HEK293 (cell line): ENCODE measurements at regions of chr6 and their contacts with region 1.

Region 1: DNA sequence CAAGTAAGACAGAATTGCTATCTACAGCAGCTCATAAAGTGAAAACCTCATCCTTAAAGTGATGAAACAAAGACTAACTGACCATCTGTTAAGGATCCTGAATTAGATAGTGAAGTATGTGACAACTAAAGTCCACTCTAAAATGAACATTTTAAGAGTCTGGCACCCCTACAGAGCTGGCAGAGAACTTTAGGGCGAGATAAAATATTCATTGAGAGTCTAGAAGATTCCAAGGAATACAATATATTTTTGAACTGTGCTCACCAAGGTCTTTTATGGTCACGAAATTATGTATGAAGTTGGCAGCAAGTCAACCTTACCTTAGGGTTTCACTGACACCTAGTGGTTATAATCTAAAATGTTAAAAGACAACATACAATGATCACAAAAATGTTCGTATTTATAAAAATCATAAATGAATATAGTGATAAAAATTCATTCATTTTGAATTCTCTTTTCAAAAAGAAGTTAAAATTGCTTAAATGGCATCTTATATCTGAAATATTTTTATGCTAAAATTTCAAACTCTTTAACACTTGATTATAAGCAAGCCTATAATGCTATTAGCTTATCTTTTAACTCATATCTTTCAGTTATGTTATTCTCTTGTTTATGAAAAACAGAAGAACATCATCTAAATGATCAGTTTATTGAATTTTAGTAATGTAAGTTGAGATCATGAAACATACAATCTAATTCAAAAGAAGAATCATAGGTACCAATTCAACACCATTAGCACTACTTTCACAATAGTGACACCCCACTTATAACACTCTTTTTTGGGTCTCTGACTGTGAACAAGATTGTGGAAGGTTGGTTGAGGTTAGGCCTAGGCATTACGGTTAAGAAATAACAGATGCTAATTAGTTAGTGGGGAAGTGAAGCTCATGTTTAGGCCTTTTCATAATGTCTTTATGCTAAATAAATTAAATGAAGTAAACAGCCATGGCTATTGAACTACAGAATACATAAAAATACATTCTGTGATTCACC is 27.5 kb downstream of the RSPH3 start:
- H3K4me3 ChIP-seq: no peak overlapping the region
- H3K27ac ChIP-seq: no peak overlapping the region
- H3K4me1 ChIP-seq: no peaks in the 10 kb centered on the region
- CTCF ChIP-seq: no peak

Region 2: GRCh38 chr6:158704181-158704822 is 268.2 kb before region 1 on chr6:
- CTCF ChIA-PET with region 1: interaction called, 81 read pairs
- POLR2A ChIA-PET with region 1: no interaction called
- H3K4me3 ChIP-seq: peak overlapping the region; percentile 41
- H3K27ac ChIP-seq: no peak overlapping the region
- H3K4me1 ChIP-seq: peaks cover 10% of the 10 kb centered on the region; the same call in 1 of the 2 replicates
- CTCF ChIP-seq: peak; percentile 99

Region 3: DNA sequence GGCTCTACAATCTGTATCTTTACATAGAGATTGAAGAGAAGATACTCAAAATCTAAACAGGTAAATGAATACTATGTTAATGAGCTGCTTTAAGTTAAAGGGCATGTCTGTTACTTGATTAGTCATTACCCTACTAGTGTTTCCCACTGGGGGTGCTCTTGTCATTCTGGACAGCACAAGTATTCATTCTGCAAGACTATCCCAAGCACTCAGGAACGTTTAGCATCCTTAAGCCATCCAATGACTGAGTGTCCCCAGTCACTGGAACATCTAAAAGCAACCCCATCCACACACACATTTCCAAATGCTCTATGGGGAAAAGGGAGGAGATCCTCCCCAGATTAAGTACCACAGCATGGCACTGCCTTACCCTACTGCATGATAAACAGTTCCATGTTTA is 179.1 kb before region 1 on chr6:
- CTCF ChIA-PET with region 1: interaction called, 26 read pairs
- POLR2A ChIA-PET with region 1: no interaction called
- H3K4me3 ChIP-seq: no peak overlapping the region
- H3K27ac ChIP-seq: no peak overlapping the region
- H3K4me1 ChIP-seq: peaks cover 16% of the 10 kb centered on the region
- CTCF ChIP-seq: no peak

Region 4: GRCh38 chr6:158799051-158799792 is 173.3 kb before region 1 on chr6:
- CTCF ChIA-PET with region 1: interaction called, 24 read pairs
- POLR2A ChIA-PET with region 1: no interaction called
- H3K4me3 ChIP-seq: no peak overlapping the region
- H3K27ac ChIP-seq: peak overlapping the region; percentile 74
- H3K4me1 ChIP-seq: peaks cover 34% of the 10 kb centered on the region
- CTCF ChIP-seq: no peak